MCF 10A (cell line): ENCODE measurements at regions of chr3 and their contacts with region 1.

Region 1: GRCh38 chr3:143654906-143655305 is 193.4 kb downstream of the SLC9A9 start:
- DNase-seq: peak; percentile 72
- H3K4me3 Mint-ChIP-seq: no peak overlapping the region
- H3K27ac Mint-ChIP-seq: peak overlapping the region; percentile 72
- H3K4me1 Mint-ChIP-seq: peaks cover 28% of the 10 kb centered on the region
- H3K27me3 Mint-ChIP-seq: no peaks in the 10 kb centered on the region
- CTCF ChIP-seq: no peak

Region 2: GRCh38 chr3:143478115-143478693 is 176.7 kb before region 1 on chr3:
- CTCF ChIA-PET with region 1: no interaction called
- POLR2A ChIA-PET with region 1: no interaction called
- intact Hi-C with region 1: no loop called
- DNase-seq: no peak
- H3K4me3 Mint-ChIP-seq: no peak overlapping the region
- H3K27ac Mint-ChIP-seq: no peak overlapping the region
- H3K4me1 Mint-ChIP-seq: no peaks in the 10 kb centered on the region
- H3K27me3 Mint-ChIP-seq: no peaks in the 10 kb centered on the region
- CTCF ChIP-seq: no peak

Region 3: GRCh38 chr3:143608966-143609365 is 45.9 kb before region 1 on chr3:
- CTCF ChIA-PET with region 1: interaction called, 6 read pairs
- POLR2A ChIA-PET with region 1: interaction called, 39 read pairs
- intact Hi-C with region 1: no loop called
- DNase-seq: peak; percentile 83
- H3K4me3 Mint-ChIP-seq: peak overlapping the region; percentile 30
- H3K27ac Mint-ChIP-seq: peak overlapping the region; percentile 96
- H3K4me1 Mint-ChIP-seq: peaks cover 47% of the 10 kb centered on the region
- H3K27me3 Mint-ChIP-seq: no peaks in the 10 kb centered on the region
- CTCF ChIP-seq: no peak